ENCODE measurements at regions of chr7 and their contacts with region 1.

Region 1: DNA sequence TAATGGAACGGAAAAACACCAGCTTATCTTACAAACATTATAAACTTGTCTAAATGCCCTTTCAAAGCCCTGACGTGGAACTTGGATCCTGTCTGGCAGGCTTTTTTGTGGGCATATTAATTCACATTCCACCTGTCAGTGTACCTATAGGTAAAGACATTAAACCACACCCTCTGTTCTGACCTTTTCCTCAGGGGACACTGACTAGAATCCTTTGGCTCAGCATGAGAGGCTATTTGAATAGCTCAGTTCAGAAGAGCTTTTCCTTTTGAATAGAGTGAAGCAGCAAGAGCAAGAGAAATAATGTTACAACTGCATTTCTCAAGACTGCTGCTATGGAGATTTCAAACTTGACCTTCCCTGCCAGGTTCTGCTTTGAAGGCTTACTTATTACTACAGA is 76.9 kb downstream of the CYP51A1 start:
- DNase-seq: peak; percentile 74 to 78
- H3K4me3 ChIP-seq: no peak overlapping the region
- H3K4me3 Mint-ChIP-seq: peak overlapping the region; percentile 49
- H3K27ac Mint-ChIP-seq: peak overlapping the region; percentile 55
- H3K4me1 ChIP-seq: peaks cover 51% of the 10 kb centered on the region
- H3K4me1 Mint-ChIP-seq: peaks cover 16% of the 10 kb centered on the region
- H3K27me3 ChIP-seq: no peaks in the 10 kb centered on the region
- H3K27me3 Mint-ChIP-seq: no peaks in the 10 kb centered on the region
- CTCF ChIP-seq: no peak

Region 2: GRCh38 chr7:91940572-91941341 is 116.6 kb before region 1 on chr7 and contains the start of gene AKAP9:
- CTCF ChIA-PET with region 1: no interaction called
- POLR2A ChIA-PET with region 1: no interaction called
- intact Hi-C with region 1: loop called (anchors 2 kb)
- DNase-seq: peak; percentile 95 to 96
- H3K4me3 ChIP-seq: peak within 1 kb of the TSS; percentile 76
- H3K4me3 Mint-ChIP-seq: peak within 1 kb of the TSS; percentile 95
- H3K27ac Mint-ChIP-seq: peak within 1 kb of the TSS; percentile 98
- H3K4me1 ChIP-seq: peaks cover 12% of the 10 kb centered on the region
- H3K4me1 Mint-ChIP-seq: peaks cover 16% of the 10 kb centered on the region
- H3K27me3 ChIP-seq: no peaks in the 10 kb centered on the region
- H3K27me3 Mint-ChIP-seq: no peaks in the 10 kb centered on the region
- CTCF ChIP-seq: no peak
- total RNA-seq, gene AKAP9: 73.8 and 79.4 TPM in 2 replicates

Region 3: GRCh38 chr7:91993976-91994375 is 63.4 kb before region 1 on chr7:
- CTCF ChIA-PET with region 1: no interaction called
- POLR2A ChIA-PET with region 1: no interaction called
- intact Hi-C with region 1: no loop called
- DNase-seq: no peak
- H3K4me3 ChIP-seq: no peak overlapping the region
- H3K4me3 Mint-ChIP-seq: no peak overlapping the region
- H3K27ac Mint-ChIP-seq: no peak overlapping the region
- H3K4me1 ChIP-seq: no peaks in the 10 kb centered on the region
- H3K4me1 Mint-ChIP-seq: no peaks in the 10 kb centered on the region
- H3K27me3 ChIP-seq: no peaks in the 10 kb centered on the region
- H3K27me3 Mint-ChIP-seq: no peaks in the 10 kb centered on the region
- CTCF ChIP-seq: no peak

Region 4: DNA sequence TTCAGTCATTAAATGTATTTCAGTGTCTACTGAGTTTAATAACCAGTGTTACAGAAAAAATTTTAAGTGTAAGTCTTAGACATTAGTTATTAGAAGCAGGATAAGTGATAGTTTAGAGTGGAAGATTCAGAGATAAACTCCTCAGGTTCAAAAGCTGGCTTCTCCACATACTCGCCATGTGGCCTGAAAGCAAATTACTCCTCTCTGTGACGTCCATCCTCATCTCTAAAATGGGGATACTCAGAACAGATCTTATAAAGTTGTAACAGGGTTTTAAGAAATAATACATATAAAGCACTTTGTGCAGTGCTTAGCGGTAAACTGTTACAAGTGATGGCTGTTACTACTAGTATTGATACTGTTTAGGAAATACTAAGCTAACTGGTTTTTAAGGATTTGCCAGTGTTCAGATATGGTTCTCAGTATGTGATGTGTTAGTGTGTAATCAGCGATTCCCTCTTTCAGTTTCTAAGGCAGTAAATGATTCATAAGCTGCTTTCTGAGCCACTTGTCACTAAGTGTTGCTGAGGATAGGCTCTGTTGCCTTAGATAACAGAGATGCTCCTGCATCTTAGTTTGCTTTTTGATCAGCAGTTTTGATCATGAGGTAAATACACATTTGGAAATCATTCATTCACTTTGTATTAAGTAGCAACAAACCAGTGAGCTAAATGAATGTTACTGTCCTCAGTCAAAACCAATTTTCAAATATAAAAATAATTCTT is 18.2 kb after region 1 on chr7:
- CTCF ChIA-PET with region 1: no interaction called
- POLR2A ChIA-PET with region 1: no interaction called
- intact Hi-C with region 1: loop called (anchors 1 kb)
- DNase-seq: peak in 1 of 2 experiments; percentile 3
- H3K4me3 ChIP-seq: no peak overlapping the region
- H3K4me3 Mint-ChIP-seq: no peak overlapping the region
- H3K27ac Mint-ChIP-seq: peak overlapping the region; percentile 74
- H3K4me1 ChIP-seq: peaks cover 17% of the 10 kb centered on the region
- H3K4me1 Mint-ChIP-seq: peaks cover 7% of the 10 kb centered on the region
- H3K27me3 ChIP-seq: no peaks in the 10 kb centered on the region
- H3K27me3 Mint-ChIP-seq: no peaks in the 10 kb centered on the region
- CTCF ChIP-seq: no peak

Measured in Caco-2 (cell line).